Caco-2 (cell line): ENCODE measurements at regions of chr1 and their contacts with region 1.

Region 1: DNA sequence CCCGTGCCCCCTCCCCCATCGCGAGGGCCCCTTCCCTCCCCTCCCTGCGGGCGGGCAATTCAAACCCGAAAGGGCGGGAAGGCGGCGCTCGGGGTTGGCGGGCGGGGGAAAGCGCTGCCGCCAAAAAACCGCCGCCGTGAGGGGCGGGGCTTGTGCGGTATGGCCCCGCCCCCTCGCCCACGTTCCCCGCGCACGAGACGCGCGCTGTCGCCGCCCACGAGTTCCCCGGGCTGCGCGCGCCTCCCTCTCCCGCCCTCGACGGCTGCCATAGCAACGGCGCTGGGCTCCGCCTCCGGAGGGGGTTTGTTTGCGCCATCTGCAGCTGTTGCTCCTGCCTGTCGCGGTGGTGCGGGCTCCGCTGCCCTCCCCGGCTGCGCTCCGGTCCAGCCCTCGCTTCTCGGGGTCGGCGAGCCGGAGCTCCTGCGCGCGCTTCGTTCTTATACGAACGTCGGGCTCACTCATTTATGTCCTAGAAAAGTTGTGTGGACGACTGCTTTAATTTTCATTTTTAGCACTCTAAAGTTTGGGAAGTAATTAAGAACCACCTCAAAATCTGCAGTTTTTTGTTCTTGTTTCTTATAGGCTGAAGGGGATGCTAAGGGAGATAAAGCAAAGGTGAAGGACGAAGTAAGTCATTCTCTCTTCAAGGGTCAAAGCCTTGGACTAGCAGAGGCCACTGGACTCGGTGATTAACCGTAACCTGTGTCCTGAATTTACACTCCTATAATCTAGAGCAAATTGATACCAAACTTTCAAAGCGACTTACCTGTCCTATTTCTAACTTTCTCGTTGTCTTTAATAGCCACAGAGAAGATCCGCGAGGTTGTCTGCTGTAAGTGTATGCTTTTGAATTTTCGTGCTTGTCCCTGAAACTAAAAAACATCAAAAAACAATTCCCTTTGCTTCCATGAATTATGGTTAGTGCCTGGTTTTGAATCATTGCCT is 933 bp downstream of the HMGN2 start:
- DNase-seq: peak; percentile 89 to 92
- H3K4me3 ChIP-seq: peak overlapping the region; percentile 78
- H3K4me3 Mint-ChIP-seq: peak overlapping the region; percentile 80
- H3K27ac Mint-ChIP-seq: peak overlapping the region; percentile 45
- H3K4me1 ChIP-seq: peaks cover 15% of the 10 kb centered on the region
- H3K4me1 Mint-ChIP-seq: peaks cover 12% of the 10 kb centered on the region
- H3K27me3 ChIP-seq: no peaks in the 10 kb centered on the region
- H3K27me3 Mint-ChIP-seq: no peaks in the 10 kb centered on the region
- CTCF ChIP-seq: no peak

Region 2: DNA sequence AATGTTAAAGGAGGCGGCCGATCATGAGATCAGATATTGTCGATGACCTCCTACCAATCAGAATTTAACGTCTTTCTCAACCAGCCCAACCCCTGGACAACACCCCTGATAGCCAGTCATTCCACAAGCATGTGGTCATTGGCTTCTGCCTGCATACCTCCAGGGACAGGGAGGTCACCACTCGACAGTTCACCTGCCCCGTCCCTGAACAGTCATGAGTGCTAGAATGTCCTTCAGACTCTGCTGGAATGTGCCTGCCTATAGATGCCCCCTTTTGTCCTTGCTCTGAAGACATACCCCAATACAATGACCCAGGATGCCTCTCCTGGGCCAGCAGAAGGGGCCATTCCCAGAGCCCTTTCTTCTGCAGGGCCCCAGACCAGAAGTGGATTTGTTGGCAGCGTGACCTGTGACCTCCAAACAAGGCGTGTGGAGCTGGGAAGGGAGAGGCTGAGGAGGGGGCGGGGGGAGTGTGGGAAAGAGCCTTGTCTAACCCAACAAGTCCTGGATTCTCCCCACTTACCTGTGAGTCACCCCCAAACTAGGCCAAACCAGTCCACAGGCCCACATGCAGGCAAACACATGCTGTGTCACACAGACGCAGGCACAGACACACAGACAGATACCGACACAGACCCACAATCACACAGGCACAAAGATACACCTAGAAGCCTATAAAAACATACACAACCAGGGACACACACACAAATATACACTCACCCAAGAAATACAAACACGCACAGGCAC is 121.4 kb before region 1 on chr1:
- CTCF ChIA-PET with region 1: no interaction called
- POLR2A ChIA-PET with region 1: no interaction called
- intact Hi-C with region 1: loop called (anchors 5 kb)
- DNase-seq: peak; percentile 87 to 95
- H3K4me3 ChIP-seq: peak overlapping the region; percentile 54
- H3K4me3 Mint-ChIP-seq: peak overlapping the region; percentile 79
- H3K27ac Mint-ChIP-seq: peak overlapping the region; percentile 100
- H3K4me1 ChIP-seq: peaks cover 64% of the 10 kb centered on the region
- H3K4me1 Mint-ChIP-seq: peaks cover 24% of the 10 kb centered on the region
- H3K27me3 ChIP-seq: no peaks in the 10 kb centered on the region
- H3K27me3 Mint-ChIP-seq: no peaks in the 10 kb centered on the region
- CTCF ChIP-seq: no peak

Region 3: DNA sequence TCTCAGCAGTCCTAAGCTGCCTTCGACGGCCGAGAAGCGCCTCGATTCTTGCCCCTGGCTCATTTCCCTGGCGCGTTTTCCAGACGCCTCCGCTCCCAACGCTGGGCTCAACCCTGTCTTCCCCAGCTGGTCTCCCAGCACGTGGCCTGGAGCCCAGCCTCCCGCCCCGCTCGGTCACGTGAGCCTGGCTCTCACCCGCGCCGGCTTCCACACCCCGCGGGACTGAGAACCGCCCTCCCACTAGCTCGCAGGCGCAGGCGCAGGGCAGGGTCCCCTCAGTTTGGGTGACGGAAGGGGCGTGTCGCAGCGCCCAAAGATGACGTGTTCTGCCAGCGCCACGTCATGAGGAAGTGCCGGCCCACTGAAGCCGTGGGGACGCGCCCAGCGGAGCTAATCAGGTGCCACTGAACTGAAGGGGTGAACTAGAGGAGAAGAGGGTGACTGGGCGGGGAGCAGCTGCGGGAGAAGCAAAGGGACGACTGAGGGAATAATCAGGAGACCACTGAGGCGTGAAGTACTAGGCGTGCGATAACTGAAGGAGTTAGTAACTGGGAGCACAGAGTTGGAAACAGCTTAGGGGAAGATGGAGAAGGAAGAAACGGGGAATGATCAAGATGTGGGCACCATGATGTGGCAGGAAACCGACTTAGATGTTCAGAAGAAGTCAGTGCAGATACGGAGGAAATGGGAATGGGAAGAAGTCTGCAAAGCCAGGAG is 41.0 kb before region 1 on chr1 and contains the start of gene DHDDS:
- CTCF ChIA-PET with region 1: interaction called, 15 read pairs
- POLR2A ChIA-PET with region 1: interaction called, 8 read pairs
- intact Hi-C with region 1: loop called (anchors 1 kb)
- DNase-seq: peak; percentile 97
- H3K4me3 ChIP-seq: peak within 1 kb of the TSS; percentile 78
- H3K4me3 Mint-ChIP-seq: peak within 1 kb of the TSS; percentile 95
- H3K27ac Mint-ChIP-seq: peak within 1 kb of the TSS; percentile 94
- H3K4me1 ChIP-seq: peaks cover 6% of the 10 kb centered on the region
- H3K4me1 Mint-ChIP-seq: no peaks in the 10 kb centered on the region
- H3K27me3 ChIP-seq: no peaks in the 10 kb centered on the region
- H3K27me3 Mint-ChIP-seq: no peaks in the 10 kb centered on the region
- CTCF ChIP-seq: no peak
- total RNA-seq, gene DHDDS: 46.9 and 55.6 TPM in 2 replicates

Region 4: DNA sequence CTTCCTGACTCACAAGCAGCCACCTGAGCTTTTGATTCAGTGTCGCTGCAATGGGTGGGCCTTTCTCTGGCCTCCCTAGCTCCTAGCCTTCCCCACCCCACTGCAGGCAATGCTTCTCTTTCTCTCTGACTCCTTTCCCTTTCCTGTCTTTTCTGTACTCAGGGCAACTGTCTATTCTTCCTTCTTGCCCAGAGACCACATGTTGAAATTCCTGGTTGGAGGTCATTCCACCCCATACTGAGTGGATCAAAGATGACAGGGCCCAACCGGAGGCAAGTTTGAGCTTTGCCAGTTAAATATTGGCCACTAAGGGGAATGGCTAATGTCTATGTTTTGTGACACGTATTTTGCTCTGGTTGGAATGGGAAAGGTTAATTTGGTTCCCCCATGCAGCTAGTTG is 157.5 kb after region 1 on chr1:
- CTCF ChIA-PET with region 1: no interaction called
- POLR2A ChIA-PET with region 1: no interaction called
- intact Hi-C with region 1: no loop called
- DNase-seq: no peak
- H3K4me3 ChIP-seq: no peak overlapping the region
- H3K4me3 Mint-ChIP-seq: no peak overlapping the region
- H3K27ac Mint-ChIP-seq: no peak overlapping the region
- H3K4me1 ChIP-seq: peaks cover 30% of the 10 kb centered on the region
- H3K4me1 Mint-ChIP-seq: peaks cover 5% of the 10 kb centered on the region
- H3K27me3 ChIP-seq: no peaks in the 10 kb centered on the region
- H3K27me3 Mint-ChIP-seq: no peaks in the 10 kb centered on the region
- CTCF ChIP-seq: no peak